ENCODE measurements at regions of chr15 and their contacts with region 1.

Region 1: GRCh38 chr15:67109141-67110034 is 44.0 kb downstream of the SMAD3 start:
- DNase-seq: peak; percentile 47 to 85
- H3K4me3 ChIP-seq: no peak overlapping the region
- H3K27ac ChIP-seq: peak overlapping the region; percentile 4 to 37
- H3K4me1 ChIP-seq: peaks cover 19 to 54% of the 10 kb centered on the region in 2 donors
- H3K27me3 ChIP-seq: no peaks in the 10 kb centered on the region
- CTCF ChIP-seq: no peak

Region 2: DNA sequence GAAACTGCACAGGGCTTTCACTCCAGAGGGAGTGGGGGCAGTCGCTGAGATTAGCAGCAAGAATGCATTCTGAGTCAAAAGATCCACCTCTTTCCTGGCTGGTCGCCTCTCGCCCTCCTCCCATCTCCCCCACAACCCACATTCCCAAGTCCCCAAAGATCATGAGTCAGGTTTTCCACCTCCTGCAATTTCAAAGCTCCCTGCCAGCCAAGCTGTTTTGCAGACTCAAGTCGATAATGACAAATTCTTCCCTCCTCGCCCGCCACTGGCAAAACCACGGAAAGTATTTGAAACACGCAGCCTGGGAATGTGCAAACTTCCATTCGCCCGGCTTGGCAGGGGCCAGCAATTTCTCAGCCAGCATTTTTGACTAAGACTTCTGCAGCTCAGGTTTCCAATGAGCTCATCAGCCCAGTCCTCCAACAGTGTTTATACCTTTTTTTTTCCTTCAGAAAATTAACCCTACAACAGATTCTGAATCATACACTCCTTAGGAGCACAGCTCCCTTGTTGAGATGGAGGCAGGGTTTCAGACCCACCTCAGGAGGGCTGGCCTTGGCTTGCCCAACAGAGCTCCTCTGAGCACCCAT is 226.0 kb before region 1 on chr15:
- intact Hi-C with region 1: loop called (anchors 5 kb)
- DNase-seq: peak; percentile 80 to 99
- H3K4me3 ChIP-seq: no peak overlapping the region
- H3K27ac ChIP-seq: peak overlapping the region; percentile 63 to 73
- H3K4me1 ChIP-seq: peaks cover 6 to 27% of the 10 kb centered on the region in 2 donors
- H3K27me3 ChIP-seq: no peaks in the 10 kb centered on the region
- CTCF ChIP-seq: no peak

Region 3: GRCh38 chr15:67065444-67066093 is 43.8 kb before region 1 on chr15 and contains the start of gene SMAD3:
- intact Hi-C with region 1: loop called (anchors 5 kb)
- DNase-seq: peak; percentile 57 to 94
- H3K4me3 ChIP-seq: peak within 1 kb of the TSS; percentile 85 to 94
- H3K27ac ChIP-seq: peak within 1 kb of the TSS; percentile 96
- H3K4me1 ChIP-seq: peaks cover 8 to 19% of the 10 kb centered on the region in 2 donors
- H3K27me3 ChIP-seq: no peaks in the 10 kb centered on the region
- CTCF ChIP-seq: no peak
- total RNA-seq, gene SMAD3: 89.3 TPM

Region 4: DNA sequence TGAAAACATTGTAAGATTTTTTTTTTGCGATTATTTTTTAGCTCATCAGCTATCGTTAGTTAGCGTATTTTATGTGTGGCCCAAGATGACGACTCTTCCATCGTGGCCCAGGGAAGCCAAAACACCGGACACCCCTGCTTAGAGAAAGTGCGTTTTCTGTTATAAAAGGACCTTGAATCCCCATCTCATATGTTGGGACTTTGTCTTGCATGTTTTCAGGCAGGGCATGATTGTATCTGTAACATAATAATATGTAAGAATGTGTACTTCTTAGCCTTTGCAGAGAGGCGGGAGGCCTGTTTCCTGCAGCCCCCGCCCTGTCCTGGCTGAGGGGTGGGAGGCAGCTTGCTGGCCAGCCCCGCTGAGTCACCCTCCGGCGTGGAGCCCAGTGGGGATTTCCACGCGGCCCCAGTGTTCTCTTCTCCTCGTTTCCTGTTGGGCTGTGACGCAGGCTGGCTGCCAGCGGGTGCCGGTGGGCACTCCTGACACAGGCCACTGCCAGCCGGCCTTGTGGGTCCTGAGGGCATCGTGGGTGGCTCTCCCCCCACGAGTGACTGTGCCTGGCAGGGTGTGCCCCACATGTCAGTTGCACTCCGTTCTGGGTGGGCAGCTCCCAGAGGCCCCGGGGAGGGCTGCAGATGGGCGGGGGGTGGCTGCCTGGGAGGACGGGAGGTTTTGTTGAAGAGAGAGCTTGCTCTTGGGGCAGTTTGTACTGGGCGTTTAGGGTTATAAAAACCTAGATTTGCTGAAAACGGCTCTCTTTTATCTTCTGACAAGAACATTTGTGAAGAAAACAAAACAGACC is 11.7 kb after region 1 on chr15:
- intact Hi-C with region 1: loop called (anchors 2 kb)
- DNase-seq: peak; percentile 93 to 96
- H3K4me3 ChIP-seq: peak overlapping the region; percentile 29 to 41
- H3K27ac ChIP-seq: peak overlapping the region; percentile 81 to 92
- H3K4me1 ChIP-seq: peaks cover 22 to 73% of the 10 kb centered on the region in 2 donors
- H3K27me3 ChIP-seq: no peaks in the 10 kb centered on the region
- CTCF ChIP-seq: no peak

Region 5: DNA sequence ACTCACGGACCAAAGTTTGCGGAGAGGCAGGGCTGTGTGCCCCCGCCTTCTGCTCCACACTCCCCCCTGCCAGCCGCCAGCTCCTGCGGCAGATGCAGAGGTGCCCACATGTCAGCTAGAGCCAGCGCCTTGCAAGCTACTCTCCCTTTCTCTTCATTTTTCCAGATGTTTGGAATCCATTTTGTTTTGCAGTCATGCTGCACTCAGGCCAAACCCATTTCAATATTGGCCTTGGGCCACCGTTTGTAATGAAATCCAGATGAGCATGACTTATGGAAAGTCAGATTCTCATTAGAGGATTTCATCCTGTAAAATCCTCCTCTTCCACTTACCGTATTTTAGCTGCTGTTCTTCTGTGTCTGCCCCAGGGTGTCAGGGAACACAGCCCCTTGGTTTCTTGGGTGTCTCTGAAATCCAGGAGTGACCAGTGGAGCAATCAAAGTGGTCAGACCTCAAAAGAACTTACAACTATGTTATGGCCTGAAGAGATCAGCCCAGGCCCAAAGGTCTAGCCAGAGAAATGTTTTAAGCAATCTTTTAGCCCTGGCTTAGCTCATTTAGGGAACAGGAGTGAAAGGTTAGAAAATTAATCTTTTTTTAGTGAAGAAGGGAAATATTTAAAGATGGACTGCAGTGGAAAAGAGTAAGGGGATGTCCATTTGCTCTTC is 79.3 kb after region 1 on chr15:
- intact Hi-C with region 1: loop called (anchors 5 kb)
- DNase-seq: no peak
- H3K4me3 ChIP-seq: no peak overlapping the region
- H3K27ac ChIP-seq: peak overlapping the region; percentile 92 to 95
- H3K4me1 ChIP-seq: peaks cover 30 to 47% of the 10 kb centered on the region in 2 donors
- H3K27me3 ChIP-seq: no peaks in the 10 kb centered on the region
- CTCF ChIP-seq: no peak